A549 (cell line): ENCODE measurements at regions of chr12 and their contacts with region 1.

Region 1: DNA sequence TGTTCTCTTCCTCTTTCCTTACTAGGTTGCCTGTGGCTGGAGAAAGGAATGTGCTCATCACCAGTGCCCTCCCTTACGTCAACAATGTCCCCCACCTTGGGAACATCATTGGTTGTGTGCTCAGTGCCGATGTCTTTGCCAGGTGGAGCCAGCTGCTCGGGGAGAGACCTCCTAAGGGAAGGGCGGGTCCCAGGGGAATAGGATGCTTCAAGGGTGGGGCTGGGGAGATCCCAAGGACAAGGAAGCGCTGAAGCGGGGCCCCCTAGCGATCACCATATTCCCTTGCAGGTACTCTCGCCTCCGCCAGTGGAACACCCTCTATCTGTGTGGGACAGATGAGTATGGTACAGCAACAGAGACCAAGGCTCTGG is 10.2 kb downstream of the MARS1 start:
- DNase-seq: no peak
- ATAC-seq: peak; percentile 62 to 68; a peak in 5 of 6 replicates
- H3K4me3 ChIP-seq: no peak overlapping the region
- H3K27ac ChIP-seq: no peak overlapping the region
- H3K4me1 ChIP-seq: no peaks in the 10 kb centered on the region
- CTCF ChIP-seq: no peak
- EP300 ChIP-seq: no peak
- POLR2A ChIP-seq: no peak
- RAD21 ChIP-seq: no peak

Region 2: GRCh38 chr12:57511588-57512325 is 13.6 kb after region 1 on chr12:
- CTCF ChIA-PET with region 1: interaction called, 15 read pairs
- POLR2A ChIA-PET with region 1: interaction called, 5 read pairs
- DNase-seq: no peak
- ATAC-seq: no peak
- H3K4me3 ChIP-seq: no peak overlapping the region
- H3K27ac ChIP-seq: no peak overlapping the region
- H3K4me1 ChIP-seq: peaks cover 4% of the 10 kb centered on the region; the same call in 2 of the 3 replicates
- CTCF ChIP-seq: no peak
- EP300 ChIP-seq: no peak
- POLR2A ChIP-seq: no peak
- RAD21 ChIP-seq: no peak

Region 3: DNA sequence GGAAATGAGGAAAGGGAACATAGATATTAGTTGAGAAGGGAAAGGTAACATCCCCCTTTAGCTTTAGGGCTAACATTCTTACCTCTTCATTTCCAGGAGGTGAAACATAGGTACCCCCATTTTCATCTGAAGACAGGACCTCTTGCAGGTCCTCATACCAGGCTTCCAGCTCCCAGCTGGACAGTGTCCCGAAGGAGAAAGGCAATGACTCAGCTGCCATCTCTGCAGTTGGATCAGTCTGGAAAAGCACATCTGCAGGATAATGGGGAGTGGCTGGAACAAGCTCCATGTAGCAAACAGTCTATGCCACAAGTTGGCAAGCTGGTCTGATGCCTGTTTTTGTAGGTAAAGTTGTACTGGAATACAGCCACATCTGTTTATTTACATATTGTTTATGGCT is 19.1 kb after region 1 on chr12:
- CTCF ChIA-PET with region 1: interaction called, 15 read pairs
- POLR2A ChIA-PET with region 1: interaction called, 3 read pairs
- DNase-seq: peak in 1 of 2 experiments; percentile 51
- ATAC-seq: no peak
- H3K4me3 ChIP-seq: no peak overlapping the region
- H3K27ac ChIP-seq: peak overlapping the region in 1 of 2 experiments; percentile 49; a peak in 3 of 6 replicates
- H3K4me1 ChIP-seq: peaks cover 41% of the 10 kb centered on the region
- CTCF ChIP-seq: no peak
- EP300 ChIP-seq: no peak
- POLR2A ChIP-seq: no peak
- RAD21 ChIP-seq: no peak

Region 4: GRCh38 chr12:57637364-57637763 is 139.2 kb after region 1 on chr12:
- CTCF ChIA-PET with region 1: no interaction called
- POLR2A ChIA-PET with region 1: no interaction called
- DNase-seq: peak in 1 of 2 experiments; percentile 56
- ATAC-seq: no peak
- H3K4me3 ChIP-seq: no peak overlapping the region
- H3K27ac ChIP-seq: no peak overlapping the region
- H3K4me1 ChIP-seq: peaks cover 8% of the 10 kb centered on the region
- CTCF ChIP-seq: peak; percentile 24; the same call in 1 of the 3 replicates
- EP300 ChIP-seq: no peak
- POLR2A ChIP-seq: no peak
- RAD21 ChIP-seq: peak in 1 of 2 experiments; percentile 36; a peak in 3 of 5 replicates